ENCODE measurements at regions of chr13 and their contacts with region 1.

Region 1: DNA sequence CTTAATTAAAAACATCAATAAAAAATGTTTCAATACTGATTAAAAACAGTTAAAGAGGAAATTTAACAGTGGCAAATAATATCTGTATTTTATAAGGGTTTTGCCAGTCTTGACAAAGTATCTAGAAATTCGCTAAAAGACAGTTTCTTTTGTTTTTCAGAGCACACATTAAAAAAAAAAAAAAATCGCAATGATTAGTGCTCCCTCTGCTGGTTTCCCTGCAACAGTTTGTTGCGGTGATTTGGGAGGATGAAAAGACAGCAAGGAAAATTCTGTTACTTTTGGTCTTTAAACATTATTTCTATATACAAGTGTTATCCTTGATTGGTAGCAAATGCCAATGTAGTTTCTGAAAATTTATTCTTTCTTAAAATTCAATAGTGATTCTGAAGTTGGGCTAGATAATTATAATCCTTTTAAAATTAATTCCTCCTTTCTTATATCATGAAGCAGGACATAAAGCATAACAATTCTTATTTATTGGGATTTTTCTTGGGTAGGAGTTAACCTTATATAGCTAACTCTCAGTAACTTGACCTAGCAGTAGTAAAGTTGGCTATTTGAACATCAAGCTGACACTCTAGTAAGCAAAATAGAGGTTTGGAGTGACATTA is 23.1 kb upstream of the SPRY2 start:
- DNase-seq: no peak
- H3K4me3 Mint-ChIP-seq: no peak overlapping the region
- H3K27ac Mint-ChIP-seq: no peak overlapping the region
- H3K4me1 Mint-ChIP-seq: no peaks in the 10 kb centered on the region
- H3K27me3 Mint-ChIP-seq: peaks cover 2% of the 10 kb centered on the region

Region 2: GRCh38 chr13:79679334-79679733 is 684.7 kb before region 1 on chr13:
- intact Hi-C with region 1: loop called (anchors 5 kb)
- DNase-seq: peak; percentile 80
- H3K4me3 Mint-ChIP-seq: no peak overlapping the region
- H3K27ac Mint-ChIP-seq: no peak overlapping the region
- H3K4me1 Mint-ChIP-seq: no peaks in the 10 kb centered on the region
- H3K27me3 Mint-ChIP-seq: peaks cover 5% of the 10 kb centered on the region

Measured in activated CD4-positive, alpha-beta T cell treated with anti-CD3 and anti-CD28 coated beads, Interleukin-2, amount 10 ng/mL, durations not matched to agents 24 days and 14 days (primary cell).